ENCODE measurements at regions of chr4 and their contacts with region 1.

Region 1: GRCh38 chr4:137543198-137543597 is 10.9 kb upstream of the PCDH18 start:
- DNase-seq: no peak

Region 2: GRCh38 chr4:137800861-137801260 is 257.7 kb after region 1 on chr4:
- CTCF ChIA-PET with region 1: no interaction called
- POLR2A ChIA-PET with region 1: no interaction called
- DNase-seq: no peak

Region 3: DNA sequence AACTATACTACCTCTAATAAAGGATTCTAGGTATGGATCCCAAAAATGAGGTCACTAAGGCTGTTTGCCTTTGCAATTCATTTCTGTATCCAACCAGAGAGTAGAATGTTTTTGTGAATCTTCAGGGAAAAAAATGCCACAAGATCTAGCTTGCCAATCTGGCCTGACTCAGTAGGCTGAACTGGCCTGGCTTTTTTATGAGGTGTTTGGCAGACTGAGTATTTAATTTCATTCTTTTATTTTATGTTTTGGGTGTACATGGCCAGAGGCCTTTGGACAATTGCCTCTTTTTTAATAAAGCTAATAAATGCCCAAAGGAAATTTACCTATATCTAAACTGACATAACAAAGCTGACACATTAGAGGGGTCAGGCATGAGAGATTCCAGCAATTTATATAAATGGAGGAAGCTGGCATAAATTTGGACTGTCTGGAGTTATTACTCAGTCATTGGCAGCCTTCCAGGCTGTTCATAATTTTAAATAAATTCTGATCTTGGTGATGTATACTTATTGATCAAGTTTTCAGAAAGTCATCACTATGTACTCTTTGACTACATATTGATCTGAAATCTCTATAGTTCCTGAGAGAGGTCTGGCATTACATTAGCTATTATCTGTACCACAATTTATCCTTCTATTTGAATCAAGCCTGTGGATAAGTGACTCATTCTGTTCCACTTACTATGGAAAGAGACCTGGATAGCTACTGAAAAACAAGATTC is 1096.0 kb after region 1 on chr4:
- CTCF ChIA-PET with region 1: interaction called, 13 read pairs
- POLR2A ChIA-PET with region 1: no interaction called
- DNase-seq: no peak

Measured in HEK293T (cell line).